Calu3 (cell line): ENCODE measurements at regions of chr1 and their contacts with region 1.

Region 1: GRCh38 chr1:26233903-26234643 is at the start of gene CEP85:
- DNase-seq: peak; percentile 94
- H3K4me3 Mint-ChIP-seq: peak within 1 kb of the TSS; percentile 93
- H3K27ac Mint-ChIP-seq: peak within 1 kb of the TSS; percentile 92
- H3K4me1 Mint-ChIP-seq: peaks cover 33% of the 10 kb centered on the region
- H3K27me3 Mint-ChIP-seq: no peaks in the 10 kb centered on the region
- CTCF ChIP-seq: peak; percentile 57
- total RNA-seq, gene CEP85: 19.9 and 24.6 TPM in 2 replicates

Region 2: GRCh38 chr1:26169669-26170471 is 64.2 kb before region 1 on chr1 and contains the start of gene ZNF593:
- CTCF ChIA-PET with region 1: interaction called, 20 read pairs
- intact Hi-C with region 1: loop called (anchors 10 kb)
- DNase-seq: peak; percentile 88
- H3K4me3 Mint-ChIP-seq: peak within 1 kb of the TSS; percentile 81
- H3K27ac Mint-ChIP-seq: peak within 1 kb of the TSS; percentile 52
- H3K4me1 Mint-ChIP-seq: no peaks in the 10 kb centered on the region
- H3K27me3 Mint-ChIP-seq: peaks cover 6% of the 10 kb centered on the region
- CTCF ChIP-seq: peak; percentile 70
- total RNA-seq, gene ZNF593: 22.2 and 23.1 TPM in 2 replicates

Region 3: DNA sequence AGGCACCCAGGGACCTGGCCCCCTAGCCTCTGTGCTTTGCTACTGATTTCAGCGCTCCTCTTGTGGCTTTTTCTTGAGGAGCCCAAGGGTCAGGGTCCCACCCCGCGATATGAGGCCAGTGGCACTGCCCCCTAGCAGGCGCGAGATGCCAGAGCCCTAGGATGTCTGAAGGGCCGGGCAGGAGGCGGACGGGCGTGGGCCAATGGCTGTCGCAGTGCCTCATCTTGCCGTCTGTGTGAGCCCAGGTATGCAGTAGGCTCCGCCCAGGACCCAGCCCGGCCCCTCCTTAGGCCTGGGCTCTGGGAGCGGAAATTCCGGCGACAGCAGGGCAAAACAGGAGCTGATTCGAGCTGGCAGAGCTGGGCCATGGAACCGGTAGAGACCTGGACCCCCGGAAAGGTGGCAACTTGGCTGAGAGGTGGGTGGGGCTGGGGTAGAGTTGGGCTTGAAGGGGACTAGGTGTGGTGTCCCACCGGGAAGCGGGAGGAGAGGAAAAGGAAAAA is 56.8 kb before region 1 on chr1 and contains the start of gene CNKSR1:
- CTCF ChIA-PET with region 1: interaction called, 10 read pairs
- intact Hi-C with region 1: loop called (anchors 10 kb)
- DNase-seq: peak; percentile 89
- H3K4me3 Mint-ChIP-seq: peak within 1 kb of the TSS; percentile 76
- H3K27ac Mint-ChIP-seq: peak within 1 kb of the TSS; percentile 78
- H3K4me1 Mint-ChIP-seq: peaks cover 11% of the 10 kb centered on the region
- H3K27me3 Mint-ChIP-seq: no peaks in the 10 kb centered on the region
- CTCF ChIP-seq: peak; percentile 39
- total RNA-seq, gene CNKSR1: 28.1 and 30.6 TPM in 2 replicates